Gastrocnemius medialis (tissue), 4 donors: ENCODE measurements at regions of chr16 and their contacts with region 1.

Region 1: DNA sequence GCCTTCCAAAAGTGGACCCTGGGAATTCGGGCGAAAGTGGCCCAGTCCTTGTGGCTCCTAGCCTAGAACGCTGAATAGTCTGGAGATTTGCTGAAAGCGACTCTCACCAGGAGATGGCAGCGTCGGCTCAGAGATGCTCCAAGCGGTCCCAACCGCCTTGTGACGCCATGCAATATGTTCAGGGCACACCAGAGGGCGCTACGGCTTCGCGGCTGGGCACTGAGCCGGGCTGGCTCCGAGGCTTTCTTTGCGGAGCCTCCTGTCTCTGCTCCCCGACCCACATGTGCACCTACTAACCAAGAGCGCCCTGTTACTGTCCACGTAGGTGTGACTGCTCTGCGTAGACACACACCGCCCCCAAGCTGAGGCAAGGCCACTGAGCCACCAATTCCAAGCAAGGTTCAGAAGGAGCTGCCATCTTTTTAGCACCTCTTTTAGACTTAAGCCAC is 36.9 kb downstream of the SYCE1L start:
- DNase-seq: peak; percentile 47 to 61
- ATAC-seq: peak; percentile 89 to 94
- H3K4me3 ChIP-seq: no peak overlapping the region
- H3K27ac ChIP-seq: no peak overlapping the region
- H3K4me1 ChIP-seq: no peaks in the 10 kb centered on the region
- H3K27me3 ChIP-seq: no peaks in the 10 kb centered on the region
- CTCF ChIP-seq: peak; percentile 86 to 94 (median 92)
- POLR2A ChIP-seq: no peak

Region 2: GRCh38 chr16:77059446-77059845 is 176.6 kb before region 1 on chr16:
- in situ Hi-C with region 1: no loop called
- intact Hi-C with region 1: no loop called
- DNase-seq: no peak
- ATAC-seq: no peak
- H3K4me3 ChIP-seq: no peak overlapping the region
- H3K27ac ChIP-seq: no peak overlapping the region
- H3K4me1 ChIP-seq: no peaks in the 10 kb centered on the region
- H3K27me3 ChIP-seq: no peaks in the 10 kb centered on the region
- CTCF ChIP-seq: no peak
- POLR2A ChIP-seq: no peak

Region 3: DNA sequence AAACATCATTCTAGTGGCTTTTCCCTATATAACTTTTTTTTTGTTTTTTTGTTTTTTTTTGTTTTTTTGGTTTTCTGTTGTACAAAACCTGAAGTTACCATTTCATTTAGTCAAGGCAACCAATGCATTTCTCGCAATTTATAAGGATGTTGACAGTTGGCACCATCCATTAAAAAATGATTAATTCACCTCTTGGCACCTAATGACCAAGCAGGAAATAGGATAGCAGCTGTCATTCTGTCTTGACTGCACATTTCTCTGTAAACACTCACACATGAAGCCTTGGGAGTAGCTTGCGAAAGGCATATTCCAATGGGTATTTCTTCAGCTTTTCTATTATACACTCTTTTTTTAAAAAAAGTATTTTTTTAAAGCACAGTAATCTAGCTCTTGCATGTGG is 40.6 kb after region 1 on chr16:
- in situ Hi-C with region 1: no loop called
- intact Hi-C with region 1: no loop called
- DNase-seq: no peak
- ATAC-seq: no peak
- H3K4me3 ChIP-seq: no peak overlapping the region
- H3K27ac ChIP-seq: no peak overlapping the region
- H3K4me1 ChIP-seq: no peaks in the 10 kb centered on the region
- H3K27me3 ChIP-seq: no peaks in the 10 kb centered on the region
- CTCF ChIP-seq: no peak
- POLR2A ChIP-seq: no peak

Region 4: DNA sequence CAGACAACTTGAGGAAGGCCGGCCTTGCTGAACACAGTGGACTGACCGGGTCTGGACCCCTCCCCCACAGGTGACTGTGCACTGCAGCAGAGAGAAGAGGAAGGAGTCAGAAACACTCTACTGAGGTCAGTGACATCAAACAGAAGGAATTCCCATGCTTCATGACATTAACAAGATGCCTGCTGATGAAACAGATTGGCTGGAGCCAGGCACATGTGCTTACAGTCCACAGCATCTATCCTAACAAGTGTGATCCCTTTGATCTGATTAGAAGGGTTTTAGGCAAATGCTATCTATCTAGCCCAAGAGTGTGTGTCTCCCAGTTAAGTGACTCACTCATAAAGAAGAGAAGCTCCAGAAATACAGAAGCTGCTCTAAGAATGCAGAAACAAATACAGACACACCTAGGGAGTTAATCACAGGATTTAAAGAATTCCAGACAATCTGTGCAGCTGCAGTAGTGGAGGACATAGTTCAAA is 53.3 kb after region 1 on chr16:
- in situ Hi-C with region 1: no loop called
- intact Hi-C with region 1: no loop called
- DNase-seq: no peak
- ATAC-seq: no peak
- H3K4me3 ChIP-seq: no peak overlapping the region
- H3K27ac ChIP-seq: no peak overlapping the region
- H3K4me1 ChIP-seq: no peaks in the 10 kb centered on the region
- H3K27me3 ChIP-seq: no peaks in the 10 kb centered on the region
- CTCF ChIP-seq: no peak
- POLR2A ChIP-seq: no peak

Region 5: GRCh38 chr16:77584205-77584859 is 348.2 kb after region 1 on chr16:
- in situ Hi-C with region 1: loop called (anchors 5 kb)
- intact Hi-C with region 1: loop called (anchors 1 kb)
- DNase-seq: no peak
- ATAC-seq: peak in 1 of 2 donors; percentile 44
- H3K4me3 ChIP-seq: no peak overlapping the region
- H3K27ac ChIP-seq: no peak overlapping the region
- H3K4me1 ChIP-seq: no peaks in the 10 kb centered on the region
- H3K27me3 ChIP-seq: no peaks in the 10 kb centered on the region
- CTCF ChIP-seq: peak; percentile 53 to 77 (median 63)
- POLR2A ChIP-seq: no peak

Region 6: DNA sequence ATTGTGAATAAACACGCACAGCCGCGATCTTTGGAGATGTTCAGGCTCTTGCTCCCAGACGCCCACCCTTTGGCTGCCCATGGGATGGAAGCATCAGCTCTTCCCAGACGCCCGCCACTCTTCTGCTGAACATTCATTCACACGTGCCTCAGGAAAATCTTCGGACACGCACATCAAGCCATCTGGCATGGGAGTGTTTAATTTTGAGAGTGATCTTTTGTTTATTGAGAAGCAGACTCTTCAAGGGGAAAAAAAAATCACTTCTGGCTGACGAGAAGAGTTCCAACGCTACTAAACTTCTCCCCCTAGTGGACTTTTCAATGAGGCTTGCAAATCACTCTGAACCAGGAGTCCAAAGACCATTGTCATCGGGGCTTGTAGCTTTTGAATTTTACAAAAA is 424.2 kb after region 1 on chr16:
- in situ Hi-C with region 1: loop called in 1 of 4 experiments (anchors 10 kb)
- intact Hi-C with region 1: loop called (anchors 5 kb)
- DNase-seq: no peak
- ATAC-seq: no peak
- H3K4me3 ChIP-seq: no peak overlapping the region
- H3K27ac ChIP-seq: no peak overlapping the region
- H3K4me1 ChIP-seq: no peaks in the 10 kb centered on the region
- H3K27me3 ChIP-seq: peaks cover 0 to 3% (median 0%) of the 10 kb centered on the region in 3 donors
- CTCF ChIP-seq: peak in 3 of 5 experiments; percentile 8 to 45 (median 39)
- POLR2A ChIP-seq: no peak

Region 7: GRCh38 chr16:77971306-77972271 is 735.5 kb after region 1 on chr16:
- in situ Hi-C with region 1: loop called in 2 of 4 experiments (anchors 25 kb)
- intact Hi-C with region 1: no loop called
- DNase-seq: peak; percentile 26 to 31
- ATAC-seq: peak; percentile 39 to 52
- H3K4me3 ChIP-seq: no peak overlapping the region
- H3K27ac ChIP-seq: no peak overlapping the region
- H3K4me1 ChIP-seq: no peaks in the 10 kb centered on the region
- H3K27me3 ChIP-seq: no peaks in the 10 kb centered on the region
- CTCF ChIP-seq: peak; percentile 46 to 73 (median 63)
- POLR2A ChIP-seq: no peak